ENCODE measurements at regions of chr15 and their contacts with region 1.

Region 1: DNA sequence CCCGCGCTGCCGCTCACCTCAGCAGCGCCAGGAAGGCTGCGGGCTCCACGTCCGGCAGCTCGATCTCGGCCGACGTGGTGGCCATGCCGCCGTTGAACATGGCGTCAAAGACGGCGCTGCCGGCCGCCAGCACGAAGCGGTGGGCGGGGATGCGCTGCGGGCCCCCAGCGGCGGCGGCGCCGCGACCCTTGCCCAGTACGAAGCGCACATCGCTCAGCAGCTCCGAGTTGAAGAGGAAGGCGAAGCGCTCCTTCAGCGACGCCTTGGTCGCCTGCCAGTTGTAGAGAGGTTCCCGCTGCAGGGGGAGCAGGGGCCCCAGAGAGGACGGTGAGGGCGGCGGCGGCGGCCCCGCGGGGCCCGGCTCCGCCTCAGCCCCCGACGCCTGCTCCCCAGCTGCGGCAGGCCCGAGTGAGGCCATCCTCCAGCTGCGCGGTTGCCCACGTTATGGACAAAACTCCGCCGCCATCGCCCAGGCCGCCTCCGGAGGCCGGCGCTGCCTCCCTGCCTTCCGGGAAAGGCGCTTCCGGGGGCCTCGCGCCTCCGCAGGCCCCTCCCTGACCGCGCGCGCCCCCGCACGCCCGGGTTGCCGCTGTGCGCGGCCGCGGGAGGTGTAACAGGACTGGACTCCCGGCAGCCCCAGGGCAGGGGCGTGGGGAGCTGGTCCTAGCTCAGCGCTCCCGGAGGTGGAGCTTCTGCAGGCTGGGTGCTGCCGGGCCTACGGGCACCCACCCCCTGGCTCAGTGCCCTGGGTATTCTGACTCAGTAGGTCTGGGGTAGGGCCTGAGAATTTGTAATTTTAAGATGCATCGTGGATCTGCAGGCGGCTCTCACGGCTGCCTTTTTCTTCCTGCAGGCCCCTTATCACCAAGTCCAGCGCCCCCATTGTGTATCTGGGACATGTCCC is at the start of gene BTBD1:
- DNase-seq: peak; percentile 90
- H3K4me3 ChIP-seq: peak within 1 kb of the TSS; percentile 89
- H3K27ac ChIP-seq: peak within 1 kb of the TSS; percentile 67
- H3K27me3 ChIP-seq: no peaks in the 10 kb centered on the region
- CTCF ChIP-seq: no peak
- polyA plus RNA-seq, gene BTBD1: 89.8 and 113 TPM in 2 replicates

Region 2: GRCh38 chr15:83053151-83053550 is 13.8 kb before region 1 on chr15:
- CTCF ChIA-PET with region 1: interaction called, 3 read pairs
- POLR2A ChIA-PET with region 1: interaction called, 14 read pairs
- DNase-seq: no peak
- H3K4me3 ChIP-seq: no peak overlapping the region
- H3K27ac ChIP-seq: no peak overlapping the region
- H3K27me3 ChIP-seq: no peaks in the 10 kb centered on the region
- CTCF ChIP-seq: no peak

Region 3: GRCh38 chr15:83112233-83112955 is 45.4 kb after region 1 on chr15:
- CTCF ChIA-PET with region 1: interaction called, 3 read pairs
- POLR2A ChIA-PET with region 1: interaction called, 11 read pairs
- DNase-seq: peak; percentile 78
- H3K4me3 ChIP-seq: peak overlapping the region; percentile 23
- H3K27ac ChIP-seq: peak overlapping the region; percentile 84
- H3K27me3 ChIP-seq: no peaks in the 10 kb centered on the region
- CTCF ChIP-seq: 0 out of 2 replicates have a peak, but pooled peaks have one; percentile 32